CD8-positive, alpha-beta T cell (primary cell): ENCODE measurements at regions of chr1 and their contacts with region 1.

Region 1: GRCh38 chr1:31944205-31945089 is 6.3 kb upstream of the PTP4A2 start:
- DNase-seq: peak; percentile 49 to 92 (median 85)
- ATAC-seq: peak; percentile 61
- H3K4me3 ChIP-seq: peak overlapping the region; percentile 36 to 65
- H3K4me3 Mint-ChIP-seq: peak overlapping the region; percentile 92
- H3K27ac ChIP-seq: peak overlapping the region; percentile 41 to 78
- H3K27ac Mint-ChIP-seq: peak overlapping the region; percentile 97
- H3K4me1 ChIP-seq: peaks cover 47% of the 10 kb centered on the region
- H3K4me1 Mint-ChIP-seq: peaks cover 50% of the 10 kb centered on the region
- H3K27me3 ChIP-seq: no peaks in the 10 kb centered on the region
- H3K27me3 Mint-ChIP-seq: no peaks in the 10 kb centered on the region
- CTCF ChIP-seq: no peak

Region 2: GRCh38 chr1:31815752-31816500 is 128.5 kb before region 1 on chr1 and contains the start of gene SPOCD1:
- CTCF ChIA-PET with region 1: interaction called, 13 read pairs
- POLR2A ChIA-PET with region 1: interaction called, 5 read pairs
- intact Hi-C with region 1: no loop called
- DNase-seq: peak; percentile 66 to 91 (median 83)
- ATAC-seq: peak; percentile 97
- H3K4me3 ChIP-seq: no peak within 1 kb of the TSS
- H3K4me3 Mint-ChIP-seq: no peak within 1 kb of the TSS
- H3K27ac ChIP-seq: peak within 1 kb of the TSS in 1 of 2 experiments; percentile 12
- H3K27ac Mint-ChIP-seq: no peak within 1 kb of the TSS
- H3K4me1 ChIP-seq: no peaks in the 10 kb centered on the region
- H3K4me1 Mint-ChIP-seq: peaks cover 17% of the 10 kb centered on the region
- H3K27me3 ChIP-seq: no peaks in the 10 kb centered on the region
- H3K27me3 Mint-ChIP-seq: no peaks in the 10 kb centered on the region
- CTCF ChIP-seq: peak; percentile 72
- total RNA-seq, gene SPOCD1: not detected

Region 3: DNA sequence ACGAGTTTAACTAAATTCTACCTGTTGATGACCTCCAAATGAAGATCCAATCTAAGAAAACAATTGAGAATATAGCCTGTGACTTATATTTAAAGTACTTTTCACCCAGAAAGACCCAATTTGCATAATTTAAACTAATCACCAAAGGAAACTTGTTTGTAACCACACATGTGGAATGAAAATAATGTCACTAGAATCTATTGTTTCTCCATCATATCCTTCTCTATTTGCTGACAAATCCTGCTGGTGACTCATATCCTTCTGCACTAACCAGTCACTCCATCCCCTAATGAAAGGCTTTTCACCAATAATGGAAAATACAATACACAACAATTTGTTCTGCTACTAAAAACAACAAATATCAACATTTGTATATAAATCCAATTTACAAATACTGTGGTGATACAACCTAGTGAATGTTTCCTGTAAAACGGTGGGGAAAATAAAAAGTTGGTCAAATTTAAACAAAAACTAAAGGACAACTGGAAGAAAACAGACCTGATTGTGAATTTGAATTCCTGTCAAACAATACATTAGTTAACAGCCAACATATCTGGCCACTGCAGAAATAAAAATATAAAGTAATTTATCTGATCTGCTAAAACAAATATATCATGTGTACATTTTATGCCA is 12.7 kb before region 1 on chr1:
- CTCF ChIA-PET with region 1: interaction called, 349 read pairs
- POLR2A ChIA-PET with region 1: interaction called, 18 read pairs
- intact Hi-C with region 1: loop called in 1 of 2 experiments (anchors 1 kb)
- DNase-seq: peak in 1 of 9 experiments; percentile 59
- ATAC-seq: no peak
- H3K4me3 ChIP-seq: peak overlapping the region in 1 of 2 experiments; percentile 37
- H3K4me3 Mint-ChIP-seq: peak overlapping the region; percentile 75
- H3K27ac ChIP-seq: peak overlapping the region in 1 of 2 experiments; percentile 85
- H3K27ac Mint-ChIP-seq: peak overlapping the region; percentile 99
- H3K4me1 ChIP-seq: peaks cover 95% of the 10 kb centered on the region
- H3K4me1 Mint-ChIP-seq: peaks cover 86% of the 10 kb centered on the region
- H3K27me3 ChIP-seq: no peaks in the 10 kb centered on the region
- H3K27me3 Mint-ChIP-seq: no peaks in the 10 kb centered on the region
- CTCF ChIP-seq: no peak

Region 4: DNA sequence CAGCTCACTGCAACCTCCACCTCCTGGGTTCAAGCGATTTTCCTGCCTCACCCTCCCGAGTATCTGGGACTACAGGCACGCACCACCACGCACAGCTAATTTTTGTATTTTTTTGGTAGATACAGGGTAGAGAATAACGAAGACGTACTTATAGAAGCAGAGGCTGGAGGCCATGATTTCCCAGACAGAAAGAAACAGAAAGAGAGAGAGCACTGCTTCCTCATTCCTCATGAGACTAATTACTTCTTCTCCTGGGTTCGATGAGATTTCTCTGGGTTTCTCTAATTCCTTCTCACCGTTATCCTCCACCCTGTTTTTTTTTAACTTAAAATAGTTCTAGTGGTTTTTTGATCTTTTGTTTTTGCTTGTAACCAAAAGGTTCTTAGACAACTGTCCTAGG is 17.1 kb after region 1 on chr1:
- CTCF ChIA-PET with region 1: interaction called, 349 read pairs
- POLR2A ChIA-PET with region 1: interaction called, 29 read pairs
- intact Hi-C with region 1: loop called (anchors 1 kb)
- DNase-seq: no peak
- ATAC-seq: no peak
- H3K4me3 ChIP-seq: no peak overlapping the region
- H3K4me3 Mint-ChIP-seq: no peak overlapping the region
- H3K27ac ChIP-seq: no peak overlapping the region
- H3K27ac Mint-ChIP-seq: no peak overlapping the region
- H3K4me1 ChIP-seq: peaks cover 27% of the 10 kb centered on the region
- H3K4me1 Mint-ChIP-seq: peaks cover 35% of the 10 kb centered on the region
- H3K27me3 ChIP-seq: no peaks in the 10 kb centered on the region
- H3K27me3 Mint-ChIP-seq: no peaks in the 10 kb centered on the region
- CTCF ChIP-seq: no peak

Region 5: GRCh38 chr1:32082022-32082421 is 137.6 kb after region 1 on chr1:
- CTCF ChIA-PET with region 1: no interaction called
- POLR2A ChIA-PET with region 1: no interaction called
- intact Hi-C with region 1: no loop called
- DNase-seq: no peak
- ATAC-seq: no peak
- H3K4me3 ChIP-seq: no peak overlapping the region
- H3K4me3 Mint-ChIP-seq: no peak overlapping the region
- H3K27ac ChIP-seq: no peak overlapping the region
- H3K27ac Mint-ChIP-seq: peak overlapping the region; percentile 47
- H3K4me1 ChIP-seq: no peaks in the 10 kb centered on the region
- H3K4me1 Mint-ChIP-seq: peaks cover 3% of the 10 kb centered on the region
- H3K27me3 ChIP-seq: no peaks in the 10 kb centered on the region
- H3K27me3 Mint-ChIP-seq: no peaks in the 10 kb centered on the region
- CTCF ChIP-seq: no peak